ENCODE measurements at regions of chr17 and their contacts with region 1.

Region 1: DNA sequence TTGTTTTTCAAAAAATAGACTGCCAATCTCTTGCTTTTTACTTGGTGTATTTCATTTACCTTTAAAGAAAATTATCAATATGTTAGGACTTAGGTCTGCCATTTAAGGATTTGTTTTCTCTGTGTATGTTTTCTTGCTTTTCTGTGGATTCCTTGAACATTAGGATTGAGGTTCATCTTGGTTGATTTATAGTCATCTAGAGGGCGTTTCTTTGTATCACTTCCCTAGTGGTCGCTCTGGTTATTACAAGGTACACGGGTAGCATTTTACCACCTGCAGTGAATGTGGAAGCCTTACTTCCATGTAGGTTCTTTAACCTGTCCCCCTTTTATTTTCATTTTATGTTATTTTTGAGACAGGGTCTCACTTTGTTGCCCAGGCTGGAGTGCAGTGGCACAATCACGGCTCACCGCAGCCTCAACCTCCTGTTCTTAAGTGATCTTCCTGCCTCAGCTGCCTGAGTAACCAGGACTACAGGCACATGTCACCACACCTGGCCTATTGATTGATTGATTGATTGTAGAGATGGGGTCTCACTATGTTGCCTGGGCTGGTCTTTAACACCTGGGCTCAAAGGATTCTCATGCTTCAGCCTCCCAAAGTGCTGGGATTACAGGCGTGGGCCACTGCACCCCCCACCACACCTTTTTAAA is 35.2 kb upstream of the CBX4 start:
- H3K4me3 ChIP-seq: no peak overlapping the region
- H3K27ac ChIP-seq: no peak overlapping the region
- H3K4me1 ChIP-seq: no peaks in the 10 kb centered on the region
- CTCF ChIP-seq: 0 out of 2 replicates have a peak, but pooled peaks have one; percentile 50

Region 2: GRCh38 chr17:79850571-79851461 is 23.6 kb before region 1 on chr17:
- CTCF ChIA-PET with region 1: interaction called, 19 read pairs
- POLR2A ChIA-PET with region 1: interaction called, 7 read pairs
- H3K4me3 ChIP-seq: no peak overlapping the region
- H3K27ac ChIP-seq: no peak overlapping the region
- H3K4me1 ChIP-seq: no peaks in the 10 kb centered on the region
- CTCF ChIP-seq: no peak